ENCODE measurements at regions of chr5 and their contacts with region 1.

Region 1: DNA sequence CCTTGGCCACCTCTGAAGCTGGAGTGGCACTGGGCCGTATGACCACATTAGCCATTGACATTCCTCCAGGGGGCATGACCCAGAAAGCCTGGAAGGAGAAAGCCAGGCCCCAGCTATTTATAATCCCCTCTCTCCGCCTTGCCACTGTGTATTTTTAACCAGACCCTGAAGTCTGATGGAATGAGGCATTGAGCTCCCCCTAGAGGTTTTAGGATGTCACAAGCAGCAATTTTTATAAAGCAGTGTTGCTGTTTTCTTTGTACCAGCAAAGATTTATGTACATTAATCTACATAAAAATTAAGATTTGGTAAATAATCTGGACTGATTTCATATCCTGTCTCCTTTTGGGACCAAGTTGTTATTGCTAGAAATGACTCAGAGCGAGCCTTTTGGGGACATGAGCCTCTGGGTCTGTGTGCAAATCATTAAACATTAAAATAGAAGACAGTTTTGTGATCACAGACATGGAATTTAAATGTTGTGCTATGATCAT is 127.1 kb downstream of the TRIO start:
- DNase-seq: no peak

Region 2: DNA sequence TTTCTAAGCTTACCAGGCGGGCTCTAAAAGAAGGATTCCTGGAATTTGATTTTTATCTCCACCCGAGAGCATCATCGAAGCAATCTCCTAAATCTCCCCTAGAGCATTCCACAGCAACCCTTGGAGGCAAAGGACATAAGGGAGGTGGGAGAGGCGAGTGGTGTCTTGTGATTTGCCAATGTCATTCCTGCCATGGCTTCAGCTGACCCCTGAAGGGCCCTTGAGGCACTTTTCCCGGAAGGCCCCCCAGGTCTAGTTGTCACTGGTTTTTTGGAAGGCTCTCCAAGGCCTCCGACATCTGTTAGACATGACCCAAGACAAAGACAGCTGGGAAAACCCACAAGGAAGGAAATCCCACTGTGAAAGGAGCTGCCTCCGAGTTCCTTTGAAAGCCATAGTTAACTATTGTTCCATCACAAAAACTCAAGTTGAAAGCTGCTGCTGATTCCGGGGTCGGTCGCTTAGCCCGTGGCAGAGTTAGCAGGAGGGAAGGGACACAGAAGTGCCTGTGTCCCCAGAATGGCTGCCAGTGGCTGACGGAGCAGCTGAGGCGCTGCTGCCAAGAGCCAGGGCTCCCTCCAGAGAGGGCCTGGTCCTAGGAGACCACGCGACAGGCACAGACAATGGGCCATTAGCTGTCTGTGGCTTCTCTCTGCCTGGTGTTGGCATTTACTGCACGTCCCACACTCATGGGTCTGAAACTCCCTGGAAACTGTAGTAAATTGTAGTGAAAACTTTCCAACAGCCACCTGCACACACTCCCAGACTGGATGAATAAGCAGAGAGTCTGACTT is 151.5 kb before region 1 on chr5:
- intact Hi-C with region 1: loop called (anchors 10 kb)
- DNase-seq: no peak

Region 3: DNA sequence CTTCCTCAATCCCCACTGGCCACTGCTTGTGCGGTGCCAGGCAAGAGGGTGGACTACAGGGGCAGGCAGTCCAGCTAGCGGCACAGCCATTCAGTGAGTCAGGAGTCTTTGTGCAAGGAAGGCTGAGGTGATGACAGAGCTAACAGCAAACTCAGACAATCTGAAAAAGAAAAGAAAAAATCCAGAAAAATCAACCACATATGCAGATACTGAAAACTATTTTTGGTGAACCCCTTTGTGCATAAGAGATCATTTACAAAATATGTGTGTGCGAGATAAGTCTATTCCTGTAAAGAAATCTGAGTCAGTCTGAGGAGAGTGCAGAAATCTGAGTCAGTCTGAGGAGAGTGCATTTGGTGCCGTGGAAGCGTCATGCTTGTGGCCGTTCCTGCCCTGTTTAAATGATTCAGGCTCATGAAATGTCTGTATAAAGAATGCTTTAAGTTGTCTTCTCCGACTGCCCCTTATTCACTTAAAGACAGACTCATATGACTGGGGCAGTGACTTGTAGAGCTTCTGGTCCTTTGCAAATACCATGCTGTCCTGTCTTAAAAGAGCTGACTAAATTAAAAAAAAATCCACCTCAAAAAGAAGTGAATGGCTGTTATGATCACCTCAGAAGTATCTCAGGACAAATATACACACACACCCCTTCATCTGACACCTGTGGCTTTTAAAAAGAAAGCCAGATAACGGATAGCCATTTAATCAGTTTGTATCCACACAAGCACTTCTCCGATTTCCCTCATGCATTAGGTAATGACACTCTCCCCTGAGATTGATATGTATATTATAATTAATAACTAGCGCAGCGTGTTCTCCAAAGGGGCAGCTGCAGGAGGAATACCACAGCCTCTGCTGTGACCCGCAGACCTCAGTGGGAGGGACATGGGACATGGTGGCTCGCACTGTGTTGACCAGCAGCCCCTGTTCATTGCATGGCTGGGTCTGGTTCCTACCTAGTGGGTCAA is 79.8 kb before region 1 on chr5:
- intact Hi-C with region 1: loop called in 1 of 2 experiments (anchors 5 kb)
- DNase-seq: peak; percentile 88